ENCODE measurements at regions of chr1 and their contacts with region 1.

Region 1: GRCh38 chr1:160251687-160252526 is 10.4 kb downstream of the DCAF8 start:
- DNase-seq: peak; percentile 57
- H3K4me3 ChIP-seq: no peak overlapping the region
- H3K27ac ChIP-seq: no peak overlapping the region
- H3K4me1 ChIP-seq: peaks cover 5% of the 10 kb centered on the region
- H3K27me3 ChIP-seq: no peaks in the 10 kb centered on the region
- CTCF ChIP-seq: peak; percentile 49 to 64
- POLR2A ChIP-seq: no peak

Region 2: DNA sequence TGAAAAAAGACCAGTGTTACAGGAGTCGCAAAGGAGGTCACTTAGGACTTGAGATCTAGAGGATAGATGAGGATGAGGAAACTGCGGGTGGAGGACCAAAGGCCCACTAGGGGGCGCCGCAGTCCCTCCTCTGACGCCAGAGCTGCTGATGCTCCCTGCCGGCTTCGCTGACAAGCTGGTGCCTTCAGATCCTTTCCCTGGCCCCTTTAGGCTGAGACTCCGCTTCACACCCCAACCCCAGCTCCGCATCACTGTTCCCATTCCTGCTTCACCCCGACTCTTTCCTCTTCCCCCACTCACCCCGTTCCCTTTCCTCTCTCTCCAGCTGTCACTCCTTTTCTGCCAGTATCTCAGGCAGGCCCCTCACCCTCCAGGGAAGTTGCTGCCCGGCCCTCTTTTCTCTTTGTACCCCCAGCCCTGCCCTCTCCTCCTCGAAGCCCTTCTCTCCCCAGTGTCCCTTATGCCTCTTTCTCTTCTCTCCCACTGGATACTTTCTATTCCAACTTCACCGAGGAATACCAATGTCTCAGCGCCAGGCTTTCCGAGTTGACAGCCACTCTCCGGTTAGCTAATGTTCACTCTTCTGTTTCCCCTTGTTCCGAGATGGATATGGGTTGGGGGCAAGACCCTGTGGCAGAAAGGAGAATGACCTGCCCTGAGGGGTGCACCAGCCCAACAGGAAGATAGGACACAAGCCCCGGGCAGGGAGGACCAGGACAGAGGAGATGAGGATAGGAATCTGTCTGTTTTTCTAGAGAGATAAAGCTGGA is 166.0 kb before region 1 on chr1:
- CTCF ChIA-PET with region 1: interaction called, 36 read pairs
- POLR2A ChIA-PET with region 1: no interaction called
- dilution Hi-C with region 1: no loop called
- intact Hi-C with region 1: no loop called
- DNase-seq: peak; percentile 65
- H3K4me3 ChIP-seq: no peak overlapping the region
- H3K27ac ChIP-seq: no peak overlapping the region
- H3K4me1 ChIP-seq: no peaks in the 10 kb centered on the region
- H3K27me3 ChIP-seq: peaks cover 35 to 37% of the 10 kb centered on the region in 2 experiments
- CTCF ChIP-seq: peak; percentile 82 to 99
- POLR2A ChIP-seq: no peak

Region 3: DNA sequence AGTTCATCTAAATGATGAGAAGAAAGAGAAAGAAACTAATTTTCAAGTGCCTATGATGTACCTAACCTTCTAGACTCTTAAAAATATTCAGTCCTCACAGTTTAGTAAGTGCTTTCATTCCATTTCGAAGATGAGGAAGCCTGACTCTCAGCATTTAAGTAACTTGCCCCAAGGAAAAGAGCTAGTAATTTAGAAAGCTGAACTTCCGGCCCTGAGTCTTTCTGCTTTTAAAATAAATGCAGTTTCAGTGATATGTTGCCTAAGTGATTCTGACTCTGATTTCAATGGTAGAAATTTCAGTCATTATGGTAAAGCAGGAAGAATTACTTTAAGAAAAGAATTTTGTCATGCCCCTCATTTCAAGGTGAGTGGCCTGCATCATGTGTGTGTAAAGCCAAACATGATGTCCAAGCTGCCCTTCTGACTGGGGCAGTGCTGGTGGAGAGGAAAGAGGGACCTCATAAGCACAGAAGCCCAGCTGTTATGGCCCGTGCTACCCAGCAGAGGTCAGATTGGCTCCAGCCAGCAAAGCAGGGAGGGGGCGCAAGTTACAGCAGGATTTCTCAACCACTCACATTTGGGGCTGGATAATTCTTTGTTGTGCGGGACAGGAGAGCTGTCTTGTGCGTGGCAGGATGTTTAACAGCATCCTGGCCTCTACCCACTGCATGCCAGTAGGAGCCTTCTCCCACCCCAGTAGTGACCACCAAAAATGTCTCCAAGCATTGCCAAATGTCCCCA is 89.8 kb before region 1 on chr1:
- CTCF ChIA-PET with region 1: interaction called, 35 read pairs
- POLR2A ChIA-PET with region 1: no interaction called
- dilution Hi-C with region 1: no loop called
- intact Hi-C with region 1: no loop called
- DNase-seq: peak; percentile 34
- H3K4me3 ChIP-seq: no peak overlapping the region
- H3K27ac ChIP-seq: no peak overlapping the region
- H3K4me1 ChIP-seq: no peaks in the 10 kb centered on the region
- H3K27me3 ChIP-seq: peaks cover 8 to 11% of the 10 kb centered on the region in 2 experiments
- CTCF ChIP-seq: peak; percentile 20 to 68
- POLR2A ChIP-seq: no peak

Region 4: GRCh38 chr1:160219062-160219929 is 32.6 kb before region 1 on chr1:
- CTCF ChIA-PET with region 1: interaction called, 61 read pairs
- POLR2A ChIA-PET with region 1: no interaction called
- dilution Hi-C with region 1: no loop called
- intact Hi-C with region 1: no loop called
- DNase-seq: peak; percentile 73
- H3K4me3 ChIP-seq: no peak overlapping the region
- H3K27ac ChIP-seq: peak overlapping the region; percentile 16
- H3K4me1 ChIP-seq: peaks cover 12% of the 10 kb centered on the region
- H3K27me3 ChIP-seq: no peaks in the 10 kb centered on the region
- CTCF ChIP-seq: peak; percentile 52 to 70
- POLR2A ChIP-seq: no peak

Region 5: GRCh38 chr1:160261893-160262794 is 10.2 kb after region 1 on chr1 and contains the start of gene DCAF8:
- CTCF ChIA-PET with region 1: interaction called, 27 read pairs
- POLR2A ChIA-PET with region 1: interaction called, 6 read pairs
- dilution Hi-C with region 1: no loop called
- intact Hi-C with region 1: no loop called
- DNase-seq: peak; percentile 99
- H3K4me3 ChIP-seq: peak within 1 kb of the TSS; percentile 27 to 87 (median 64)
- H3K27ac ChIP-seq: peak within 1 kb of the TSS; percentile 74
- H3K4me1 ChIP-seq: peaks cover 15% of the 10 kb centered on the region
- H3K27me3 ChIP-seq: no peaks in the 10 kb centered on the region
- CTCF ChIP-seq: no peak
- POLR2A ChIP-seq: peak; percentile 91
- total RNA-seq, gene DCAF8: 99.9 and 106 TPM in 2 replicates

Region 6: DNA sequence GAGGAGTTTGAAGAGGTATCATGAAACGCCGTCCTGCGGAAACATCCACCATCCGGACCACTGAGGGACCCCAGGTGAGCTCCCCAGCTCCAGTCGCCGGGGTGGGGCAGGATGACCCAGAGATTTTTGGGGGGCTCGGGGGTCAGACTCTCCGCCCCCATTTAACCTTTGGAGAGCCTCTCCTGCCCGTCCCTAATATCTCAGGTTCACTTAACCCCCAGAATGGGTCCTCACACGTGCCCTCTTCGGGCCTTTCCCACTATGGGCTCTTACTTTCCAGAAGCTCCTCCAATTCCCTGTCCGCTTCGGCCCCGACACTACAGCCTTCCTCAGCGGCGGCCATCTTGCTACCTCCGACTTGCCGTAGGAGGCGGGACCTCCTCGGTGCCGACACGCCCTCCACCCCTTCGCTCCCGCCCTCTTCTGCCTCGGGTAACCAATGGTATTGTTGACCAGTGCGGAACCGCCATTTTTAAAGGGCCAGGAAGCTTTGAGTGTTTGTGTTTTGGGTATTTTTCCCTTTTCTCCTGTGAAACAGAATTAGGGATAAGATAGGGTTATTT is 33.0 kb after region 1 on chr1 and contains the start of gene PEX19:
- CTCF ChIA-PET with region 1: interaction called, 24 read pairs
- POLR2A ChIA-PET with region 1: interaction called, 3 read pairs
- dilution Hi-C with region 1: no loop called
- intact Hi-C with region 1: no loop called
- DNase-seq: peak; percentile 95
- H3K4me3 ChIP-seq: peak within 1 kb of the TSS; percentile 65 to 83 (median 72)
- H3K27ac ChIP-seq: peak within 1 kb of the TSS; percentile 45
- H3K4me1 ChIP-seq: peaks cover 9% of the 10 kb centered on the region
- H3K27me3 ChIP-seq: no peaks in the 10 kb centered on the region
- CTCF ChIP-seq: no peak
- POLR2A ChIP-seq: peak; percentile 87
- total RNA-seq, gene PEX19: 31.5 and 38.4 TPM in 2 replicates